Activated B cell treated with CpG ODN at 0.5 μM for 24 hours (primary cell): ENCODE measurements at regions of chr9 and their contacts with region 1.

Region 1: GRCh38 chr9:124285903-124286291 is 28.1 kb downstream of the NEK6 start:
- DNase-seq: no peak
- ATAC-seq: peak; percentile 25
- H3K4me3 Mint-ChIP-seq: peak overlapping the region; percentile 84
- H3K27ac Mint-ChIP-seq: peak overlapping the region; percentile 99
- H3K4me1 Mint-ChIP-seq: peaks cover 95% of the 10 kb centered on the region
- H3K27me3 Mint-ChIP-seq: no peaks in the 10 kb centered on the region
- CTCF ChIP-seq: no peak

Region 2: GRCh38 chr9:124088476-124088837 is 197.4 kb before region 1 on chr9:
- CTCF ChIA-PET with region 1: interaction called, 3 read pairs
- POLR2A ChIA-PET with region 1: no interaction called
- intact Hi-C with region 1: loop called (anchors 1 kb)
- DNase-seq: no peak
- ATAC-seq: no peak
- H3K4me3 Mint-ChIP-seq: no peak overlapping the region
- H3K27ac Mint-ChIP-seq: no peak overlapping the region
- H3K4me1 Mint-ChIP-seq: peaks cover 5% of the 10 kb centered on the region
- H3K27me3 Mint-ChIP-seq: peaks cover 12% of the 10 kb centered on the region
- CTCF ChIP-seq: no peak

Region 3: DNA sequence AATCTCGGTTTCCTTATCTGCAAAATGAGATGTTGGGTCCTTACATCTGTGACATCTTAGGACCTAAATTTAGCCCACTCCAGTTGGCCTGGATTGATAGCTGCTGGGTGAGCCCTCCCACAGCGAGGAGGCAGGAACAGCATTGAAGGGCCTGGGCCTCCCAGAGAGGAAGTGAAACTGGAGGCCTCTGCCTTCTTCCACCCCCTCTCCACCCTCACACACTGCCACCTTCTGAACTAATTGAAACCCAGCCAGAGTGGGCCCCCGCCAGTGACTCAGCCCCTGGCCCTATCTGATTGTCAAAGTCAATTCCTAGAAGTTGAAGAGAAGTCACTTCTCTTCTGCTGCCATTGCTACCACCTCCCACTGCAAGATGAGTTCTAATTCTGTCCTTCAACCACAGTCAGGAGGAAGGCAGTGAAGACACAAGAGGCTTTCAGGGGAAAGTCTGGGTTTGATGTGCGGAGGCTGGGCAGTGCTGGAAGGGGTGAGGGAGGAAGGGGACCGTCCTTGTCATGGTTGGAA is 83.4 kb before region 1 on chr9:
- CTCF ChIA-PET with region 1: no interaction called
- POLR2A ChIA-PET with region 1: interaction called, 12 read pairs
- intact Hi-C with region 1: loop called (anchors 1 kb)
- DNase-seq: peak; percentile 75
- ATAC-seq: peak; percentile 88
- H3K4me3 Mint-ChIP-seq: peak overlapping the region; percentile 80
- H3K27ac Mint-ChIP-seq: peak overlapping the region; percentile 99
- H3K4me1 Mint-ChIP-seq: peaks cover 96% of the 10 kb centered on the region
- H3K27me3 Mint-ChIP-seq: no peaks in the 10 kb centered on the region
- CTCF ChIP-seq: no peak

Region 4: DNA sequence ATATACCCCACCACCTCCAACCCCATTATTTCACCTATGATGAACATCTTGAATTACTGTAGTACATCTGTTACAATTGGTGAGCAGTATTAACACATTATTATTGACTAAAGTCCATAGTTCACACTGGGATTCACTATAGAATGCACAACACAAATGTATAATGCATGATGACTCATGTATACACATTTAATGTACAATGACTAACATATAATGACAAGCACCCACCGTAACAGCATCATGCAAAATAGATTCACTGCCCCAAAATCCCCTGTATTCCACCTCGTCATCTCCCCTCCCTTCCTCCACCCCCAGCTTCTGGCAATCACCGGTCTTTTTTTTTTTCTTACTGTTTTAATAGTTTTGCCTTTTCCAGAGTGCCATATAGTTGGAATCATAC is 75.2 kb before region 1 on chr9:
- CTCF ChIA-PET with region 1: no interaction called
- POLR2A ChIA-PET with region 1: interaction called, 17 read pairs
- intact Hi-C with region 1: loop called (anchors 2 kb)
- DNase-seq: no peak
- ATAC-seq: peak; percentile 87
- H3K4me3 Mint-ChIP-seq: peak overlapping the region; percentile 63
- H3K27ac Mint-ChIP-seq: peak overlapping the region; percentile 81
- H3K4me1 Mint-ChIP-seq: peaks cover 97% of the 10 kb centered on the region
- H3K27me3 Mint-ChIP-seq: no peaks in the 10 kb centered on the region
- CTCF ChIP-seq: no peak

Region 5: GRCh38 chr9:124257844-124258606 is 27.9 kb before region 1 on chr9 and contains the start of gene NEK6:
- CTCF ChIA-PET with region 1: interaction called, 4 read pairs
- POLR2A ChIA-PET with region 1: interaction called, 17 read pairs
- intact Hi-C with region 1: no loop called
- DNase-seq: peak; percentile 56
- ATAC-seq: peak; percentile 41
- H3K4me3 Mint-ChIP-seq: peak within 1 kb of the TSS; percentile 96
- H3K27ac Mint-ChIP-seq: peak within 1 kb of the TSS; percentile 94
- H3K4me1 Mint-ChIP-seq: peaks cover 87% of the 10 kb centered on the region
- H3K27me3 Mint-ChIP-seq: no peaks in the 10 kb centered on the region
- CTCF ChIP-seq: no peak
- total RNA-seq, gene NEK6: 110 and 115 TPM in 2 replicates

Region 6: DNA sequence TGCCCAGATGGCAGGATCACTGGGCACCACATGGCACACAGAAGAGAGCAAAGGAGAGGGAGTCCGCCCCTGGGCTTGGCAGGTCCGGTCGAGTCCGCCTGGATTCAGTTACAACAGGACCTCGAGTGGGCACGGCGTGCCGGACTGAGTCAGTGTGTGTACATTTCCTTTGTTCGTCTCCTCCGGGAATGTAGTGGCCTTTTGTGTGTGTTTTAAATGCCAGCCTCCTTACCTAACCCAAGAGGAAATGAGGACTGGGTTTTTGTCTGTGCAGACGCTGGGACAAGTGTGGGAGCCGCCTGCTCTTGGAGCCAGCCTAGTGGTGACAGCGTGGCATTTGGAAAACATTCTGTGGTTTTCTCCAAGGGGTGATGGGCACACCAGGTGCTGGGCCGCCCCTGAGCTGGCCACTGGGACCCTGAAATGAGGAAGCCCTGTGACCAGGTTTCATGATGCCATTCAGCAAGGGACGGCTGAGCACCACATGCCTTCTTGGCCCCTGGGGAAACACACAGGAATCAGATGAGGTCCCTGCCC is 18.6 kb before region 1 on chr9:
- CTCF ChIA-PET with region 1: interaction called, 3 read pairs
- POLR2A ChIA-PET with region 1: interaction called, 37 read pairs
- intact Hi-C with region 1: loop called (anchors 1 kb)
- DNase-seq: peak; percentile 43
- ATAC-seq: peak; percentile 49
- H3K4me3 Mint-ChIP-seq: peak overlapping the region; percentile 66
- H3K27ac Mint-ChIP-seq: peak overlapping the region; percentile 88
- H3K4me1 Mint-ChIP-seq: peaks cover 95% of the 10 kb centered on the region
- H3K27me3 Mint-ChIP-seq: no peaks in the 10 kb centered on the region
- CTCF ChIP-seq: no peak

Region 7: DNA sequence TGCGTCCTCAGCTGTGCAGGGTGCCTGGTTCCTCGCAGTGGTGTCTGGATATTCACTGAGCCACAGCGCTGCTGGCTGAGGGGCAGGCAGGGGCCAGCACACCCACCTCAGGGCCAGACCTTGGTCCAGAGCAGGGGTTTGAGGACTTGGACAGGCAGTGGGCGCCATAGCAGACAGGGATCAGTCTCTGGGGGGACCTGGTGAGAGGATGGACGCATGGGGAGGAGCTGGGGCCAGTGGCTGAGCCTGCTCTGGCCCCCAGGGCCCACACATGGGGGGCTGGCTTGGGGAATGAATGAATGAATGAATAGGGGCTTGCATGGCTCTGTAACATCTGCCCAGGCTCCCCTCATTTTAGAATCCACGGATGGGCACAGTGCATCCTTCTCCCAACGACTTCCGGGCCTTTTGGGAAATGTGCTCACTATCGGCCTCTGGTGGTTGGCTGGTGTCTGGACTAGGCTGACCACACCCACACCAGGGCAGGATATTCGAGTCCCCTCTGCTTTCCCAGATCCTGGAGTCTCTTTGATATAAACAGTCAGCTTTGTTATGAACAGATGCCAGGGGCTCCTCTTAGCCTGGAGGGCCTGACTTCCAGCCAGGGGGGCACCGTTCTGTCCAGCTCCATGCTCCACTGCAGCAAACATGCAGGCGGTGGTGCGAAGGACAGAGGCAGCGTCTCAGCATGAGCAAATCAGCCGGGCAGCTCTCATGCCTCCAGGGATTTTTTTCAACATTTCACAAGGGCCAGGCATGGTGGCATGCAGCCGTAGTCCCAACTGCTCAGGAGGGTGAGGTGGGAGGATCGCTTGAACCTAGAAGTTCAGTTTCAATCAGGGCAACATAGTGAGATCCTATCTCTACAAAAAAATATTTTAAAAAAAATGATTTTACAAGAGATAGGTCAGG is 34.4 kb after region 1 on chr9:
- CTCF ChIA-PET with region 1: interaction called, 3 read pairs
- POLR2A ChIA-PET with region 1: no interaction called
- intact Hi-C with region 1: loop called (anchors 5 kb)
- DNase-seq: peak; percentile 36
- ATAC-seq: peak; percentile 58
- H3K4me3 Mint-ChIP-seq: no peak overlapping the region
- H3K27ac Mint-ChIP-seq: peak overlapping the region; percentile 12
- H3K4me1 Mint-ChIP-seq: peaks cover 35% of the 10 kb centered on the region
- H3K27me3 Mint-ChIP-seq: no peaks in the 10 kb centered on the region
- CTCF ChIP-seq: no peak